Heart left ventricle (tissue), 16 donors: ENCODE measurements at regions of chr2 and their contacts with region 1.

Region 1: DNA sequence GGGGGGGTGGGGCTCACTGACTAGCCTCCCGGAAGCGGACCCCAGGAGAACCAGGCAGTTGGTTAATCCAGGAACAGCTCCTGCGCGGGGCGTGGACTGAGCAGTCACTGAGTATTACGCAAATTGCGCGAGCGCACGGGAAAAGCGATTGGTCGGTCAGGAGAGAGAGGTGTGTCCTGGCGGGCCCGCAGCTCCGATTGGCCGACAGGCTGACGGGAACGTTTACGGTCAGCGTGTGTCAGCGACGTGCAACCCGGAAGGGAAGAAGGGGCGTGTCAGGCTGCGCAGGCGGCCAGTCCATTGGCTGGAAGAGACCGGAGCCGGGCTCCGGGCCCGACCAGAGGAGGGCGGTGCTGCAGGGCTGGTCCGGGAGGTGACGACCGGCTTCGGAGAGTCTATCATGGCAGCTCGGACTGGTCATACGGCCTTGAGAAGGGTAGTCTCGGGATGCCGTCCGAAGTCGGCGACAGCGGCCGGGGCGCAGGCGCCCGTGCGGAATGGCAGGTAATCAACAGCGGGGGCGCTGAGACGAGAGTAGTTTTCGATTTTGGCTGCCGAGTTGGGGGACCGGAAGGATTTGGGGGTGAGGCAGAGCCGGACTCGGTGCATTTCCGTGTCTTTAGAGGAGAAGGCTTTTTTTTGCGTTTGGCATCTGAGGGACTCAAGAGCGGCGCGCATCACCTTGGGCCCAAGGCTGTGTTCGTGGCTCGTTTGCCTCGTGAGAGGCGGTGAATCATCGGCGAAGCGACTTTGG is at the start of gene COQ10B:
- DNase-seq: peak; percentile 99 to 100 (median 100)
- ATAC-seq: peak; percentile 98 to 99 (median 98)
- H3K4me3 ChIP-seq: peak within 1 kb of the TSS; percentile 44 to 98 (median 78)
- H3K27ac ChIP-seq: peak within 1 kb of the TSS; percentile 88 to 100 (median 98)
- H3K4me1 ChIP-seq: peaks cover 0 to 45% (median 19%) of the 10 kb centered on the region in 12 donors
- H3K27me3 ChIP-seq: no peaks in the 10 kb centered on the region
- CTCF ChIP-seq: peak in 11 of 12 donors; percentile 6 to 71 (median 42)
- POLR2A ChIP-seq: peak; percentile 36 to 89
- total RNA-seq, gene COQ10B: 26.6 to 39.9 (median 33.8) TPM

Region 2: GRCh38 chr2:197434541-197435513 is 18.5 kb before region 1 on chr2 and contains the start of gene SF3B1:
- intact Hi-C with region 1: loop called in 8 of 10 experiments (anchors 1 to 2 kb)
- DNase-seq: peak; percentile 98 to 99 (median 99)
- ATAC-seq: peak; percentile 98 to 99 (median 98)
- H3K4me3 ChIP-seq: peak within 1 kb of the TSS; percentile 63 to 99 (median 87)
- H3K27ac ChIP-seq: peak within 1 kb of the TSS; percentile 87 to 99 (median 94)
- H3K4me1 ChIP-seq: peaks cover 23 to 51% (median 45%) of the 10 kb centered on the region in 12 donors
- H3K27me3 ChIP-seq: no peaks in the 10 kb centered on the region
- CTCF ChIP-seq: no peak
- POLR2A ChIP-seq: peak in 1 of 2 donors; percentile 88
- total RNA-seq, gene SF3B1: 80.4 to 167 (median 133) TPM